A549 (cell line): ENCODE measurements at regions of chr5 and their contacts with region 1.

Region 1: DNA sequence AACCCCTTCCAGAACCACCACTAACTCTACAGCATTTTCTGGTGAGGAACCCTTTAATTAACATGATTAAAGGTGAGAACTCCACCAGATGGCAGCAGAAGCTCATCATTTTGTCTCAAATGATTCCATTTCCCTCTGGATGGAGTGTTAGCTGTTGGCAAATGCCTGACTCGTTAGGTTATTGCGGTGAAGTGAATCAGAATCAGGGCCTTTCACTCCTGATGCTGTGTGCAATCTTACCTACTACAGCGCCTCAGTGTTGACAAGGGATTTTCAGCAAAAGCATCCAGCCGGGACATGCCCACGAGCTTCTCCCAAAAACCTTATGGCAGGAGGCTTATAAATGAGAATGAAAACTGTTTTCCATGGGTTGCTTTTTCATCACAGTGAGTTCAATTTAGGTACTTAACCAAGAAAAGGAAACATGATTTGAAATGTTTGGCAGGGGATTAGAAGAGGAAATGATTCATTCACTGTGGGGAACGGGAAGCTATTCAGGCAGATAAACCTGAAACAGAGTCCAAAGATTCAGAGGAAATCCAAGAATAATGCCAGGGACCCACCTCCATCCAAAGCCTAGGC is 48.0 kb upstream of the CAST start:
- DNase-seq: peak; percentile 69 to 86
- ATAC-seq: peak; percentile 94 to 98
- H3K4me3 ChIP-seq: no peak overlapping the region
- H3K27ac ChIP-seq: peak overlapping the region; percentile 69 to 84
- H3K4me1 ChIP-seq: peaks cover 23% of the 10 kb centered on the region
- CTCF ChIP-seq: peak; percentile 94
- EP300 ChIP-seq: 0 out of 5 replicates have a peak, but pooled peaks of 1 of the 2 experiments have one; percentile 31
- POLR2A ChIP-seq: no peak
- RAD21 ChIP-seq: peak; percentile 95 to 98

Region 2: GRCh38 chr5:96344678-96345577 is 269.3 kb before region 1 on chr5:
- CTCF ChIA-PET with region 1: interaction called, 26 read pairs
- POLR2A ChIA-PET with region 1: no interaction called
- DNase-seq: peak; percentile 47 to 80
- ATAC-seq: peak; percentile 95 to 98
- H3K4me3 ChIP-seq: no peak overlapping the region
- H3K27ac ChIP-seq: peak overlapping the region; percentile 39 to 77
- H3K4me1 ChIP-seq: peaks cover 22% of the 10 kb centered on the region
- CTCF ChIP-seq: peak; percentile 94
- EP300 ChIP-seq: no peak
- POLR2A ChIP-seq: no peak
- RAD21 ChIP-seq: peak; percentile 92 to 97

Region 3: DNA sequence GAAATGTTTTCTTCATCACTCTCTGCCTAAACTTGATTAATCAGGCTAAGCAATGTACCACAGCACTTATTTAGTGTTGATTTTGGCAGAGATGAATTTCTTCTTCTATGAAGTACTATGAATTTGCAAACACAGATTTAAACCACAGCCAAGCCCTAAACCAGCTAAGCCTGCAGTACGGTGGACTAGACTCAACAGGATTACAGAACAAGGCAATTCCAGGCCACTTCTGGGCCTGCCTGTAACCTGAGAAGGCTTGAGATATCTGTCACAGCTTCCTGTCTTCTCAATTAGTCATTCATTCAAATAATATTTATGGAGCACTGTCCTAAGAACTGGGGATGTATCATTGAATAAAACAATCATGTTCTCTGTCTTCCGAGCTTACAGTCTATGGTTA is 15.6 kb after region 1 on chr5:
- CTCF ChIA-PET with region 1: interaction called, 16 read pairs
- POLR2A ChIA-PET with region 1: no interaction called
- DNase-seq: peak; percentile 44 to 61
- ATAC-seq: peak; percentile 69 to 75; a peak in 5 of 6 replicates
- H3K4me3 ChIP-seq: no peak overlapping the region
- H3K27ac ChIP-seq: peak overlapping the region; percentile 62 to 77
- H3K4me1 ChIP-seq: peaks cover 60% of the 10 kb centered on the region
- CTCF ChIP-seq: no peak
- EP300 ChIP-seq: no peak
- POLR2A ChIP-seq: no peak
- RAD21 ChIP-seq: no peak

Region 4: DNA sequence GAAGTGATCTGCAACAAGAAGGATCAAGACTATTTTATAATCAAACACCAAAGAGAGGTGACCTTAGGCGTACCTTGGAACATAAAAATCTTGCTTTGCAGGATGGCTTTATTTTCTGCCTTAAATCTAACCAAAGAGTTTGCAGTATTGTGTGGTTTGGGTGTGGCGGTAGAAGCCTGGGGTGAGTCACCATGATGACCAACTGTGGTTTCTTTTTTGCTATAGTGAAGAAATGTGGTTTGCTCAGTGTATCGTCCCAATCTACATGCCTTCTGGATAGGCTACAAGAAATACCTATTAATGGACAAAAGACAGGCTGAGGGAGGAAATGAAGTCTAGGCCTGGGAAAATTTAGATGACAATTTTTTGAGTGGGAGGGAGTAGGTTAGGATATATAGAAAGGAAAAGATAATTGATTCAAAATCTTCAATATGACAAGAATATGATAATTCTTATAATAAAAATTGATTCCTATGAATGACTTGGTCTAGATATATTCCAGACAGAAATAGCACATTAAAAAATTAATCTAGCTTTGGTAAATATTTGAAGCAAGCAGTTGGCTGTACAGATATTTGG is 43.0 kb after region 1 on chr5:
- CTCF ChIA-PET with region 1: interaction called, 17 read pairs
- POLR2A ChIA-PET with region 1: interaction called, 41 read pairs
- DNase-seq: peak; percentile 64 to 70
- ATAC-seq: peak; percentile 34 to 46; a peak in 3 of 6 replicates
- H3K4me3 ChIP-seq: no peak overlapping the region
- H3K27ac ChIP-seq: peak overlapping the region; percentile 52 to 83
- H3K4me1 ChIP-seq: peaks cover 74% of the 10 kb centered on the region
- CTCF ChIP-seq: no peak
- EP300 ChIP-seq: no peak
- POLR2A ChIP-seq: no peak
- RAD21 ChIP-seq: no peak

Region 5: DNA sequence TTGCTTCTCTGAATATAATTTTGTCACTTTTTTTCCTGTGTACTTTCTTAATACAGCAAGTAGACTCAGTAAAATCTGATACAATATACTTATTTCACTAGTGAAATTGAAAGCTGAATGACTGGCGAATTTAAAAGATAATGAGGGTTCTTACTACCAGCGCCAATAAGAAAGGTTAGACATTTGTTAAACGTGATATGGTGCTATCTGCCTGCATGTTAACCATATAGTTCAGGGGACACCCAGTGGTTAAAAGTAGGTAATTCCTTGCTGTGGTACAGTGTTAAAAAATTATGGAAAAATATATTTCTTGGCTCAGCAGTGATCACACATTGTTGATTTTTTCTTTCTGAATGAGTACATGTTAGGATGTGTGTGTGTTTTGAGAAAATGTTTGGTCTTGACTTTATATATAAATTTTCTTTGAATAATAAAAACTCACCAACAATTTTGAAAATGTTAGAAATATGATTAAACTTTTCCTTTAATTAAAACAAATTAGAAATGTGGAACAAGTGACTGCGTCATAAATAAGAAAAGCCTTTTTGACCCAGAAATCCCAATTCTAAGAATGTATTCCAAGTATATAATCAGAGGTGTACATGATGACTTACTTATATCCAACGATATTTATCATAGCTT is 73.7 kb after region 1 on chr5:
- CTCF ChIA-PET with region 1: interaction called, 155 read pairs
- POLR2A ChIA-PET with region 1: no interaction called
- DNase-seq: peak; percentile 72 to 79
- ATAC-seq: peak; percentile 88 to 95
- H3K4me3 ChIP-seq: peak overlapping the region; percentile 11; the same call in 1 of the 3 replicates
- H3K27ac ChIP-seq: peak overlapping the region in 1 of 2 experiments; percentile 47; a peak in 1 of 6 replicates
- H3K4me1 ChIP-seq: peaks cover 44% of the 10 kb centered on the region; the same call in 2 of the 3 replicates
- CTCF ChIP-seq: peak; percentile 79
- EP300 ChIP-seq: no peak
- POLR2A ChIP-seq: no peak
- RAD21 ChIP-seq: peak; percentile 85 to 88

Region 6: DNA sequence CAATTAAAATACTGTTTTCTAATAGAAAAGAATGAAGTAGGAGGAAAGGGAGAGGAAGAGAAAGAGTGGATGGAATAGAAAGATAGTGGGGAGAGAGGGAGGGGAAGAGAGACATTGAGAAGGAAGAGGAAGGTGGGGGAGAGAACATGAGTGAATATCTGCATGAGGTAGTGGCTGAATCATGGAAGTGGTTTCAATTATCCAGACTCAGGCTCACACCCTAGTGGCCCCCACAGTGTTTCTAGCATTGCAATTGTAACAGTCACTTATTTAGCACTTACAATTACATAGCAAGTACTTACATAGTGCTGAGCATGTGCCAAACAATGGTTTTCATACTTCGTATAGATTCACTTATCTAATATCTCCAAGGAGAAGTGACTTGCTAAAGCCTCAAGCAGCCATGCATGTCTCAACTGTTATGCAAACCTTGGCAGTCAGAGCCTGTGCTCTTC is 120.7 kb after region 1 on chr5:
- CTCF ChIA-PET with region 1: interaction called, 54 read pairs
- POLR2A ChIA-PET with region 1: no interaction called
- DNase-seq: no peak
- ATAC-seq: peak in 1 of 2 experiments; percentile 24; a peak in 1 of 6 replicates
- H3K4me3 ChIP-seq: no peak overlapping the region
- H3K27ac ChIP-seq: no peak overlapping the region
- H3K4me1 ChIP-seq: peaks cover 12% of the 10 kb centered on the region; the same call in 1 of the 3 replicates
- CTCF ChIP-seq: no peak
- EP300 ChIP-seq: no peak
- POLR2A ChIP-seq: no peak
- RAD21 ChIP-seq: no peak

Region 7: GRCh38 chr5:97162045-97162444 is 547.8 kb after region 1 on chr5:
- CTCF ChIA-PET with region 1: interaction called, 12 read pairs
- POLR2A ChIA-PET with region 1: no interaction called
- DNase-seq: peak; percentile 44 to 85
- ATAC-seq: peak; percentile 86 to 93
- H3K4me3 ChIP-seq: no peak overlapping the region
- H3K27ac ChIP-seq: no peak overlapping the region
- H3K4me1 ChIP-seq: peaks cover 9% of the 10 kb centered on the region
- CTCF ChIP-seq: peak; percentile 96
- EP300 ChIP-seq: no peak
- POLR2A ChIP-seq: no peak
- RAD21 ChIP-seq: peak; percentile 85 to 87